GM12878 (cell line): ENCODE measurements at regions of chr5 and their contacts with region 1.

Region 1: GRCh38 chr5:72441861-72442540 is 65.2 kb downstream of the ZNF366 start:
- DNase-seq: no peak
- ATAC-seq: peak; percentile 13; the same call in 2 of the 3 replicates
- H3K4me3 ChIP-seq: no peak overlapping the region
- H3K27ac ChIP-seq: no peak overlapping the region
- H3K4me1 ChIP-seq: peaks cover 41% of the 10 kb centered on the region
- H3K27me3 ChIP-seq: no peaks in the 10 kb centered on the region
- CTCF ChIP-seq: no peak
- EP300 ChIP-seq: no peak
- POLR2A ChIP-seq: no peak
- RAD21 ChIP-seq: no peak

Region 2: DNA sequence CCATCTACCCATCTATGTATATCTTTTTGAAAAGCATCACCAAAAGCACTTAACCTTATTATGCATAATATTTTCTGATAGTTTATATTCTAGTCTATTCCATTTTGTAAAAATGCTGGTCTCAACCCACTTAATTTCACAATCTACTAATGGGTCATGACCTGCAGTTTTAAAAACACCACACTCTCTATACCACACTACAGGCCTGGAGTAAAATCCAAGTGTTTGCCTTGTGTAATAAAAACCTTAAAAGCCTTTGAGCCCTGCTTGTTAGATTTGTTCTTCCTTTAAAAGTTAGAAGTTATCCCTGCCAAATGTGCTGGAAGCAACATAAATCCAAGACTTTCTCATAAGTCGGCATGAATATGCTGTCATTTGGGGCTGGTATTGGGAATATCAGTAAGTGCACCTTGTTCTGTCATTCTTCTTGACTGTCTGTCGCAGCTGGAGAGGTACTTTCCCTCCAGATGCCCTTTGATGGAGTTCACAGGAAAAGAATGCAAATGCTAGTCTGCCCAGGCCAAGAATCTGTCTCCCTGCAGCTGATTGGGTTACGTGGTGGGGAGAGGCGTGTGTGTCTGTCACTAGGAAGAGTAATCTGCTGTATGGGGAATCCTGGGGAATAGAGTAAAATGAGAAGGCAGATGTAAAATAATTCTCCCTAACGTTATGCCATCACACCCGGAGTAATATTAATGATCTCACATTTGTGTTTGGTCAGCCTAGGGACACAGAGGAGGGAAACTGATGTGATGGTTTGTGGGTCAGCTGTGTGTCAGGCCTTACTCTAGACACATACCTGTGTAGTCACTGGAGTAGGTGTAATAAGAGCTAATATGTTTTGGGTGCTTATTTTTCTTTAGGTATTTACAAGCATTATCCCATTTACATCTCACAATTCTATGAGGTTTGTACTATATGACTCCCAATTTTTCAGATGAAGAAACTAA is 14.2 kb before region 1 on chr5:
- CTCF ChIA-PET with region 1: interaction called, 3 read pairs
- POLR2A ChIA-PET with region 1: interaction called, 3 read pairs
- RAD21 ChIA-PET with region 1: interaction called, 4 read pairs
- SMC1A ChIA-PET with region 1: interaction called, 12 read pairs
- in situ Hi-C with region 1: no loop called
- intact Hi-C with region 1: no loop called
- DNase-seq: no peak
- ATAC-seq: no peak
- H3K4me3 ChIP-seq: no peak overlapping the region
- H3K27ac ChIP-seq: no peak overlapping the region
- H3K4me1 ChIP-seq: no peaks in the 10 kb centered on the region
- H3K27me3 ChIP-seq: no peaks in the 10 kb centered on the region
- CTCF ChIP-seq: no peak
- EP300 ChIP-seq: no peak
- POLR2A ChIP-seq: no peak
- RAD21 ChIP-seq: no peak

Region 3: GRCh38 chr5:72459089-72459661 is 17.2 kb after region 1 on chr5:
- CTCF ChIA-PET with region 1: interaction called, 7 read pairs
- POLR2A ChIA-PET with region 1: interaction called, 5 read pairs
- RAD21 ChIA-PET with region 1: interaction called, 4 read pairs
- SMC1A ChIA-PET with region 1: interaction called, 68 read pairs
- in situ Hi-C with region 1: no loop called
- intact Hi-C with region 1: loop called (anchors 1 kb)
- DNase-seq: peak; percentile 71
- ATAC-seq: peak; percentile 87
- H3K4me3 ChIP-seq: no peak overlapping the region
- H3K27ac ChIP-seq: peak overlapping the region; percentile 68
- H3K4me1 ChIP-seq: peaks cover 23% of the 10 kb centered on the region
- H3K27me3 ChIP-seq: no peaks in the 10 kb centered on the region
- CTCF ChIP-seq: no peak
- EP300 ChIP-seq: peak; percentile 38 to 48; a peak in 1 of 4 replicates
- POLR2A ChIP-seq: no peak
- RAD21 ChIP-seq: no peak